Ascending aorta (tissue), 2 donors: ENCODE measurements at regions of chr2 and their contacts with region 1.

Region 1: DNA sequence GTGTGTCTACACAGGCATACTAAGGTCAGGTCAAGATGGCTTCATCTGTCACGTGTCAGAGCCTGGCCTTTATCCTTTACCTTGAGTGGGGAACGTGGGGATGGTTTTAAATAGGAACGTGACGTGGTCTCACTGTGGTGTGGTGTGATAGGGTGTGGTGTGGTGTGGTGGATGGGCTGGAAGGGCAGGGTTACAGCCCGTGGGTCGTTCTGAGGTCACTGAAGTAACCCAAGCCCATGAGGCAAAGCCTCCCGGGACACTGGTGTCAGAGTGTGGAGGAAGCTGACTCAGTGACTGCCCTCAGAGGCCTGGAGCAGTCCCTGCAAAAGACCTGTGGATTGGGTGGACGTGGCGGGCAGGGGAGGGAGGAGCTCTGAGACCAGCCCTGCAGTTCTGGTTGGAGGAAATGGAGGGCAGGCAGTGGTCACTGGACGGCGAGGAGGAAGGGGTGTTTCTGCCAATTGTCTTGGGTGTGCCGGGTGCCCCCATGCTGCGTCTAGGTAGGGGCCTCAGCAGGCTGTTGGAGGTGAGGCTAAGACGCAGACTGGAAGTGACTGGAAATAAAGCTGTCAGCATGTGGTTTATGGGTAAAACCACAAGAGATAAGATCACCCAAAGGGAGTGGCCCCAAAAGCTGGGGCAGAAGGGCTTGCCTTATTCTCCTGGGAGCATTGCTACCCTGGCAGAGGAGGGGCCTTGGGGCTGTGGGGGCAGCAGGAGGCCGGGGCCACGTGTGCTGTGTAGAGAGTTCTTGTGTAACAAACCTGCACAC is 84.8 kb downstream of the SH3RF3 start:
- DNase-seq: peak; percentile 33 to 69
- H3K4me3 ChIP-seq: no peak overlapping the region
- H3K27ac ChIP-seq: no peak overlapping the region
- H3K4me1 ChIP-seq: peaks cover 25 to 50% of the 10 kb centered on the region in 2 donors
- H3K27me3 ChIP-seq: no peaks in the 10 kb centered on the region
- CTCF ChIP-seq: no peak

Region 2: GRCh38 chr2:109247812-109248211 is 34.0 kb after region 1 on chr2:
- intact Hi-C with region 1: loop called (anchors 5 kb)
- DNase-seq: peak in 1 of 2 donors; percentile 65
- H3K4me3 ChIP-seq: no peak overlapping the region
- H3K27ac ChIP-seq: peak overlapping the region; percentile 53 to 95
- H3K4me1 ChIP-seq: peaks cover 11 to 49% of the 10 kb centered on the region in 2 donors
- H3K27me3 ChIP-seq: no peaks in the 10 kb centered on the region
- CTCF ChIP-seq: no peak